Activated T-helper 1 cell treated with anti-CD3 and anti-CD28 coated beads, Interleukin-12 subunit alpha, Interleukin-12 subunit beta, Interleukin-2, Interleukin-4 antibody, amounts not matched to agents 30 ng/mL and 10 ng/mL and 1 ng/mL, durations not matched to agents 14 hours and 24 hours and 36 hours (primary cell): ENCODE measurements at regions of chr13 and their contacts with region 1.

Region 1: DNA sequence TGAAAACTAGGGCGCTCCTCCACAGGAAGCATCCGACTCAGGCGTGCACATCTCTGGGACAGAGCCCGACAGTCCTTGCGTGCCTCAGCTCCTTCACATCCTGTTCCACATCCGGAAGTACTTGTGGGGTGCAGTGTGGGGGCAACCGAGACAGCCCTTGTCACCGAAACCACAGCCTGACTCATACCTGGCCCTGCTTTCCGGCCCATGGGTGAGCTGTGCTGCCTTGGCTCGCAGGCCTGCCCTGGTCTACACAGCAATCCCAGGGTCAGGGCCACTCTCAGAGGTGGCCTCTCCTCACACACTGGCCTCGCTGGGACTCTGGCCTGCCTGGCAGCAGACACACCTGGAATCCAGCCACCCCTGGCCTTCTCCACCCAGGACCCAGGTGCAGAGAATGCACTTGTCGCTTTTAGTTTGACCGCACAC is 100.4 kb downstream of the STK24 start:
- DNase-seq: peak; percentile 86
- H3K4me3 Mint-ChIP-seq: peak overlapping the region; percentile 74
- H3K27ac Mint-ChIP-seq: peak overlapping the region; percentile 97
- H3K4me1 Mint-ChIP-seq: peaks cover 73% of the 10 kb centered on the region
- H3K27me3 Mint-ChIP-seq: no peaks in the 10 kb centered on the region

Region 2: GRCh38 chr13:97432917-97433726 is 1043.4 kb before region 1 on chr13:
- intact Hi-C with region 1: loop called (anchors 1 kb)
- DNase-seq: peak; percentile 99
- H3K4me3 Mint-ChIP-seq: peak overlapping the region; percentile 99
- H3K27ac Mint-ChIP-seq: peak overlapping the region; percentile 100
- H3K4me1 Mint-ChIP-seq: peaks cover 39% of the 10 kb centered on the region
- H3K27me3 Mint-ChIP-seq: peaks cover 12% of the 10 kb centered on the region

Region 3: DNA sequence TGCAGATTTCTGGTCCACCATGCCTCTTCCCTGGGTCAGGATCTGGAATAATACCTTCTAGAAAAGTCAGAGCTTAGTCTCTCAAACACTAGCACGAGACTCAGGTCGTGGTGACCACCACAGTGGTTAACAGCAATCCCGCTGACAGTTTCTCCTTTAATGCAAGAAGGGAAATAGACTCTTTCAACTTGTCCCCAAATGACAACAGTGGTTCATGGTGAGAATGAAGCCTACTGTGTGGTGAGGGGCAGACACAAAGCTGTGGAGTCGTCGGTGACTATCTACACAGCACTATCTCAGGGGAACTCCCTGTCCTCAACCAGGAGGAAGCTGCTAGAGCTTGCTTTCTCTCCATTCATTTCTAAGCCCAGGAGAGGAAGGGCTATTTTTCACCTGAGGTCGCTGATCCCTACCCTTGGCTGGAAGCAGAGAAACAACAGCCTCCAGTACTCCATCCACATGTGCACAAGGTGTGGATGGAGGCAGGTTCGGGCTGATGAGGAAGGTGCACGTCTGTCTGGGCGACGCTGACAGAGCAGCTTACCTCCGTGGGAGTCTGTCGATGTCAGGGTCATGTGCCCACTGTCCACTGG is 27.9 kb after region 1 on chr13:
- intact Hi-C with region 1: loop called (anchors 1 kb)
- DNase-seq: peak; percentile 27
- H3K4me3 Mint-ChIP-seq: no peak overlapping the region
- H3K27ac Mint-ChIP-seq: peak overlapping the region; percentile 16
- H3K4me1 Mint-ChIP-seq: peaks cover 66% of the 10 kb centered on the region
- H3K27me3 Mint-ChIP-seq: no peaks in the 10 kb centered on the region

Region 4: GRCh38 chr13:98517576-98518310 is 41.2 kb after region 1 on chr13:
- intact Hi-C with region 1: loop called (anchors 1 kb)
- DNase-seq: peak; percentile 40
- H3K4me3 Mint-ChIP-seq: peak overlapping the region; percentile 27
- H3K27ac Mint-ChIP-seq: peak overlapping the region; percentile 79
- H3K4me1 Mint-ChIP-seq: peaks cover 91% of the 10 kb centered on the region
- H3K27me3 Mint-ChIP-seq: no peaks in the 10 kb centered on the region

Region 5: DNA sequence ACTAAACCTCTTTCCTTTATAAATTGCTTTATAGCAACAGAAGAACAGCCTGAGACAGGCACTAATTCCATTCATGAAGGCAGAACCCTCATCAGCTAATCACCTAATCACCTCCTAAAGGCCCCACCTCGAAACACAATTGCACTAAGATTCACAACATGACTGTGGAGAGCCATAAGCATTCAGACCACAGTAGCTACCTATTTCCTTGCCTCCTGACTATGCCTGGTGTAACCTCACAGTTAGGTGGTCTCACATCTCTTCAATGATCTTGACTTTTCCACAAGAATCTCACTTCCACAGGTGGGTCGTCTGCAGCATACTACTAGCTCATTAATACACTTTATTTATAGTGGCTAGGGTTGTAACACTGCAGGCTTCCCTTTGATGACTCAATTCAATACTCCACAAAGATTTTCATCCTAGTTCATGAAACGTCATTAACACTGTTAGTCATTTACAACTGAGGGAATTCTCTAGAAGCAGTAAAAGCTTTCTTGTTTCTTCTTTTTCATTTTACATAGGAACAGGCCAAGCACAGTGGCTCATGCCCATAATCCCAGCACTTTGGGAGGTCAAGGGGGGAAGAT is 73.3 kb after region 1 on chr13:
- intact Hi-C with region 1: loop called (anchors 1 kb)
- DNase-seq: no peak
- H3K4me3 Mint-ChIP-seq: peak overlapping the region; percentile 38
- H3K27ac Mint-ChIP-seq: peak overlapping the region; percentile 67
- H3K4me1 Mint-ChIP-seq: peaks cover 73% of the 10 kb centered on the region
- H3K27me3 Mint-ChIP-seq: no peaks in the 10 kb centered on the region

Region 6: GRCh38 chr13:98664039-98664438 is 187.5 kb after region 1 on chr13:
- intact Hi-C with region 1: loop called (anchors 1 kb)
- DNase-seq: peak; percentile 21
- H3K4me3 Mint-ChIP-seq: no peak overlapping the region
- H3K27ac Mint-ChIP-seq: peak overlapping the region; percentile 72
- H3K4me1 Mint-ChIP-seq: peaks cover 15% of the 10 kb centered on the region
- H3K27me3 Mint-ChIP-seq: peaks cover 17% of the 10 kb centered on the region

Region 7: GRCh38 chr13:99307648-99308339 is 831.2 kb after region 1 on chr13:
- intact Hi-C with region 1: loop called (anchors 1 kb)
- DNase-seq: peak; percentile 42
- H3K4me3 Mint-ChIP-seq: peak overlapping the region; percentile 83
- H3K27ac Mint-ChIP-seq: peak overlapping the region; percentile 87
- H3K4me1 Mint-ChIP-seq: peaks cover 88% of the 10 kb centered on the region
- H3K27me3 Mint-ChIP-seq: no peaks in the 10 kb centered on the region